ENCODE measurements at regions of chr2 and their contacts with region 1.

Region 1: GRCh38 chr2:131673392-131674173 is 145.9 kb downstream of the CCDC74A start:
- DNase-seq: peak in 8 of 9 donors; percentile 38 to 69 (median 47)
- ATAC-seq: peak; percentile 77
- H3K4me3 ChIP-seq: peak overlapping the region; percentile 47
- H3K4me3 Mint-ChIP-seq: peak overlapping the region; percentile 1 to 76 (median 72)
- H3K27ac ChIP-seq: no peak overlapping the region
- H3K27ac Mint-ChIP-seq: peak overlapping the region in 1 of 9 donors; percentile 67
- H3K4me1 ChIP-seq: peaks cover 2 to 6% of the 10 kb centered on the region in 2 donors
- H3K4me1 Mint-ChIP-seq: peaks cover 0 to 6% (median 4%) of the 10 kb centered on the region in 7 donors
- H3K27me3 ChIP-seq: no peaks in the 10 kb centered on the region
- H3K27me3 Mint-ChIP-seq: peaks cover 16 to 58% (median 31%) of the 10 kb centered on the region in 5 donors

Region 2: GRCh38 chr2:131154071-131154531 is 519.5 kb before region 1 on chr2:
- CTCF ChIA-PET with region 1: interaction called, 12 read pairs
- POLR2A ChIA-PET with region 1: no interaction called
- intact Hi-C with region 1: loop called in 1 of 2 experiments (anchors 1 kb)
- DNase-seq: peak; percentile 34 to 78 (median 55)
- ATAC-seq: peak; percentile 86
- H3K4me3 ChIP-seq: peak overlapping the region; percentile 11
- H3K4me3 Mint-ChIP-seq: peak overlapping the region in 3 of 10 donors; percentile 32 to 41 (median 33)
- H3K27ac ChIP-seq: no peak overlapping the region
- H3K27ac Mint-ChIP-seq: peak overlapping the region in 4 of 9 donors; percentile 0 to 46 (median 10)
- H3K4me1 ChIP-seq: no peaks in the 10 kb centered on the region
- H3K4me1 Mint-ChIP-seq: peaks cover 5 to 25% (median 16%) of the 10 kb centered on the region in 7 donors
- H3K27me3 ChIP-seq: no peaks in the 10 kb centered on the region
- H3K27me3 Mint-ChIP-seq: peaks cover 0 to 8% (median 0%) of the 10 kb centered on the region in 5 donors

Region 3: GRCh38 chr2:131425231-131425941 is 248.2 kb before region 1 on chr2:
- CTCF ChIA-PET with region 1: no interaction called
- POLR2A ChIA-PET with region 1: no interaction called
- intact Hi-C with region 1: no loop called
- DNase-seq: peak in 1 of 9 donors; percentile 35
- ATAC-seq: no peak
- H3K4me3 ChIP-seq: no peak overlapping the region
- H3K4me3 Mint-ChIP-seq: peak overlapping the region in 8 of 10 donors; percentile 3 to 59 (median 35)
- H3K27ac ChIP-seq: no peak overlapping the region
- H3K27ac Mint-ChIP-seq: no peak overlapping the region
- H3K4me1 ChIP-seq: no peaks in the 10 kb centered on the region
- H3K4me1 Mint-ChIP-seq: peaks cover 0 to 12% (median 9%) of the 10 kb centered on the region in 7 donors
- H3K27me3 ChIP-seq: peaks cover 3 to 5% of the 10 kb centered on the region in 2 donors
- H3K27me3 Mint-ChIP-seq: peaks cover 64 to 84% (median 68%) of the 10 kb centered on the region in 5 donors

Region 4: DNA sequence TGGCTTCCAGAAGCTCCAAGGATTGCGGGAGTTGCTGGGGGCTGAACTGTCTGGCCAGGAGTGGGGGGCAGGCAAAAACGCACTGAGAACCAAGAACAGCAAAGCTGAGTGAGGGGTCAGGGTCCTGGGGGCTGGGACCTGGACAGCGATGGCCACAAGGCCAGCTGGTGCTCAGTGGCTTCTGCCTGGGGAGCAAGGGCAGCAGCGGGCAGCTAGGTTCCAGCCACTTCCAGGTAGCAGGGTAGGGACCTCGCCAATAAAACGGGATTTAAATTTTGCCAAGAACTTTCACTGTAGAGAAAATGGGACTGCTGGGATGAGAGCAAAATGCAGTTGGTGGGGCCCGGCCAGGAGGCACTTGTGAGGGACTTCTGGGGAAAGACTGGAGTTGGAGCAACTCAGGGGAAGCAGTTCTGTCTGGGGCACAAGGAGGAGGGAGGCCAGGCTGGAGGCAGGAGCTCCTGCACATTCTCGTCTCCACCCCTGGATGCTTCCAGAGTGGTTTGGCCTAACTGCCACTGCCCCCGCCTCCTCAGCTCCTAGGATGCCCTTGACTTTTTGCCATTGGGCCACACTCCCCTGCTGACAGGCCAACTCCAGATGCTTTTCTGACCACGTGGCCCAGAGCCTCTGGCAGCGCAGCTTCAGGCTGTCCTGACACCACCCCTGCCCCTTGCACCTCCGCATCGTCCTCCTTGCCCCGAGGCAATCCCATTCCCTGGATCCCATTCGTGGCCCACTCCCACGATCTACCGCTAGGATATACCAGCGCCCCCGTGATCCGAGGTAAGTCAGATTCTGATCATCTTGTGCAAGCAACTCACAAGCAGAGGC is 151.4 kb before region 1 on chr2:
- CTCF ChIA-PET with region 1: no interaction called
- POLR2A ChIA-PET with region 1: no interaction called
- intact Hi-C with region 1: loop called in 1 of 2 experiments (anchors 10 kb)
- DNase-seq: no peak
- ATAC-seq: no peak
- H3K4me3 ChIP-seq: no peak overlapping the region
- H3K4me3 Mint-ChIP-seq: no peak overlapping the region
- H3K27ac ChIP-seq: no peak overlapping the region
- H3K27ac Mint-ChIP-seq: peak overlapping the region in 1 of 9 donors; percentile 54
- H3K4me1 ChIP-seq: no peaks in the 10 kb centered on the region
- H3K4me1 Mint-ChIP-seq: peaks cover 0 to 7% (median 0%) of the 10 kb centered on the region in 7 donors
- H3K27me3 ChIP-seq: no peaks in the 10 kb centered on the region
- H3K27me3 Mint-ChIP-seq: no peaks in the 10 kb centered on the region

Region 5: DNA sequence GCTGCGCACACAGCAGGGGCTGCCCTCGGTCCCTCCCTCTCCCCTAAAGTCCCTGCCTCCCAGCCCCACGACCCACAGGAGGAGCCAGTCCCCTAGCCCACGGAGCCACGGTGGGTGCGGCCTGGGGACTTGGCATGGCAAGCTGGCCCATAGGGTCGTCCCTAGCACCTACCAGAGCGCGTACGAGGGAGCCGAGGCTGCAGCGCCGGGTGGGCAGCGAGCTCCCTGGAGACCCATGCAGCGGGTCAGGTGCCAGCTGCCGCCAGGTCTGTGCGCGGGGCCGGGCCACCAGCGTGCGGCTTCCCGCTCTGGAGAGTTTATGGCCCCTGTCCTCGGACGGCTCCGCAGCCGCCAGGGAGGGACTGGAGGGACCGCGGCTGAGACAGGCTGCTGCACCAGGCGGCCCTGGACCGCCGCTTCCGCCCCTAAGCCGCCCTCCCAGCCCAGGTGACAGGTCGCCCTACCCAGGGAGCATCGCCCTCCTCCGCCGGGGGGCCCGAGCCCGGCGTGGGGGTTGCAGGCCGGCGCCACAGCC is 127.7 kb after region 1 on chr2:
- CTCF ChIA-PET with region 1: interaction called, 10 read pairs
- POLR2A ChIA-PET with region 1: no interaction called
- intact Hi-C with region 1: loop called (anchors 1 to 2 kb)
- DNase-seq: peak in 2 of 9 donors; percentile 3 to 9
- ATAC-seq: no peak
- H3K4me3 ChIP-seq: no peak overlapping the region
- H3K4me3 Mint-ChIP-seq: peak overlapping the region in 3 of 10 donors; percentile 17 to 38 (median 19)
- H3K27ac ChIP-seq: no peak overlapping the region
- H3K27ac Mint-ChIP-seq: no peak overlapping the region
- H3K4me1 ChIP-seq: no peaks in the 10 kb centered on the region
- H3K4me1 Mint-ChIP-seq: peaks cover 0 to 9% (median 0%) of the 10 kb centered on the region in 7 donors
- H3K27me3 ChIP-seq: no peaks in the 10 kb centered on the region
- H3K27me3 Mint-ChIP-seq: peaks cover 7 to 19% (median 14%) of the 10 kb centered on the region in 5 donors

Region 6: GRCh38 chr2:133312038-133312729 is 1638.6 kb after region 1 on chr2:
- CTCF ChIA-PET with region 1: no interaction called
- POLR2A ChIA-PET with region 1: no interaction called
- intact Hi-C with region 1: no loop called
- DNase-seq: no peak
- ATAC-seq: no peak
- H3K4me3 ChIP-seq: no peak overlapping the region
- H3K4me3 Mint-ChIP-seq: no peak overlapping the region
- H3K27ac ChIP-seq: no peak overlapping the region
- H3K27ac Mint-ChIP-seq: no peak overlapping the region
- H3K4me1 ChIP-seq: no peaks in the 10 kb centered on the region
- H3K4me1 Mint-ChIP-seq: no peaks in the 10 kb centered on the region
- H3K27me3 ChIP-seq: no peaks in the 10 kb centered on the region
- H3K27me3 Mint-ChIP-seq: peaks cover 0 to 4% (median 0%) of the 10 kb centered on the region in 5 donors